ENCODE measurements at regions of chr6 and their contacts with region 1.

Region 1: DNA sequence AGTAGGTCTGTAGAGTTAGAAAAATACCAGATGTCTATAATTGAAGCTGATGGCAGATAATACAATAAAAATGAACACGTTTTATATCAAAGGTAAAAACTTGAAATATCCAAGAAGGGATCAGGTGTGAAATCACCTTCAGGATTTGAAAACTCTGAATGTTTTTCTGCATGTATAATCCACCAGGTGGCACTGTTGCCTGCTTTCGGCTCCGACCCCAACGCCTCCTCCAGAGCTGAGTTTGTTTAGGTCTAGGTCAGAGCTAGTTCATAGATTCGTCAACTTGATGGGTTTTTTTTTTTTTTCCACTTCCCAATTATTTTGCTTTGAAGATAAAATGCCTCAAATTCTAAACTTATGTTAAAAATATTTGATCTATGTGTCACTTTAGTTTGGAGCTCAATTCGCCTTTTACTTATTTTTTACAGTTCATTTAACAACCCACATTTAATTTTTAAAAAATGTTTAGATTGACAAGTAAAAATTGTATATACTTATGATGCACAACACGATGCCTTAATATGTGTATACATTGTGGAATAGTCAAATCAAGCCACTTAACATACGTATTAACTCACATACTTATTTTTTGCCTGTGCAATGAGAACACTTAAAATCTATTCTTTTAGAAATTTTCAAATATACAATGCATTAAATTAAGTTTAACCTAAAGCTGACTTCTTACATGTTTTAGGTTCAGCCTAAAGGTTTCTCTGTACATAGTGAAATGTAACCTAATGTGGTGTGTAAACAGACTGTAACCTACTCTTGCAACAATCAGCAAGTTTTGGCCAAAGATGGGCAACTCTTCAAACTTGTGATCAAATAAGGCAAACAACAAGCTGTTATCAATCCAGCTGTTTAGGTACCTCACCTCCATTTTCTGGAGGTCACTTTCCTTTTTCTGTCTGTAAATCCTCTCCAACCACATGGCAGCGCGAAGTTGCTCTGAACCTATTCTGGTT is 39.4 kb upstream of the ENPP4 start:
- DNase-seq: peak; percentile 37 to 70 (median 47)
- ATAC-seq: peak in 3 of 4 donors; percentile 63 to 68 (median 67)
- H3K4me3 ChIP-seq: no peak overlapping the region
- H3K27ac ChIP-seq: no peak overlapping the region
- H3K4me1 ChIP-seq: peaks cover 0 to 3% (median 0%) of the 10 kb centered on the region in 12 donors
- H3K27me3 ChIP-seq: peaks cover 0 to 9% (median 0%) of the 10 kb centered on the region in 9 donors
- CTCF ChIP-seq: peak; percentile 71 to 90 (median 84)
- POLR2A ChIP-seq: no peak

Region 2: DNA sequence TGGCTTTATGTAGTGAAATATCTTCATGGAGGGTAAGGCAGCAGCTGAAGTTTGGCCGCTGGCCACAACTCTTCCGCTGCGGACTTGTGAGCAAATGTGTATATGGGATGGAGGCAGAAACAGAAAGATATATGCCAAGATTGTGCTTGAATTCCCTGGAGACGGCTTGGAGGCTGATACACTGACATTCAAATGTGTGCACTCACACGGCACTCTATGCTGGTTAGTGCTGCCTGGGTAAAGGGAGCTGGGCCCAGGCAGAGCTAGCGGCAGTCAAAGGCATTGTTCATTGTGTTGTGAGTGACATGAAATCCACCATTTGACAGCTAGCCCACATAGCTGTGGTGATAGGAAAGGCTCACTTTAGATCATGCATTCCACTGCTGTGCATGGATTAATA is 277.5 kb before region 1 on chr6:
- intact Hi-C with region 1: no loop called
- DNase-seq: peak in 2 of 5 donors; percentile 7 to 35
- ATAC-seq: peak; percentile 78 to 86 (median 80)
- H3K4me3 ChIP-seq: no peak overlapping the region
- H3K27ac ChIP-seq: no peak overlapping the region
- H3K4me1 ChIP-seq: peaks cover 0 to 10% (median 0%) of the 10 kb centered on the region in 12 donors
- H3K27me3 ChIP-seq: no peaks in the 10 kb centered on the region
- CTCF ChIP-seq: no peak
- POLR2A ChIP-seq: no peak

Region 3: DNA sequence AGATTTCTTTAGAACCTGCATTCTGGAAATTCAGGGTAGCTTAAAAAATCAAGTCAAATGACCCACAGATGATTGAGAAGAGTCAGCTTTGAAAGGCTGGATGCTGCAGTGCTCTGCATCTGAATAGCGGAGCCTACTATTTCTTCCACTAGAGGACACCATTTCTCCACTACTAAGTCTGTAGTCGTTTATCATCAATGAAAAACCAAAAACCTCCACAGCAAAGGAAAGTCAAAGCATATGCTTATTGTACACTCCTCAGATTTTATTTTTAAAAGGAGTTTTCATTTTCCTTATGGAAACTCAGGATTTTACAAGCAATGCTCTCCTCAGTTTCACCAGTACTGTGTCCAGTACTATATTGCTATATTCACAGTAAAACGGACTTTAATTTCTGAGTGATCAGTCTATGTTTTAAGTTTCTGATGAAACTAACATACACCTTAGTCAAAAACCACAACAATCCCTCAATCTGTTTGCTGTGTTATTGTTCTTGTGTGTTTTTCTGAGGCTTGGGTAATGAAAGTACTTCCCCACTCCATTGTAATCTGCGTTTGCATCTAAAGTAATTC is 130.9 kb after region 1 on chr6:
- intact Hi-C with region 1: loop called in 5 of 10 experiments (anchors 5 kb)
- DNase-seq: no peak
- ATAC-seq: peak in 3 of 4 donors; percentile 35 to 67 (median 55)
- H3K4me3 ChIP-seq: no peak overlapping the region
- H3K27ac ChIP-seq: no peak overlapping the region
- H3K4me1 ChIP-seq: peaks cover 0 to 35% (median 7%) of the 10 kb centered on the region in 12 donors
- H3K27me3 ChIP-seq: no peaks in the 10 kb centered on the region
- CTCF ChIP-seq: peak; percentile 72 to 90 (median 84)
- POLR2A ChIP-seq: no peak

Region 4: DNA sequence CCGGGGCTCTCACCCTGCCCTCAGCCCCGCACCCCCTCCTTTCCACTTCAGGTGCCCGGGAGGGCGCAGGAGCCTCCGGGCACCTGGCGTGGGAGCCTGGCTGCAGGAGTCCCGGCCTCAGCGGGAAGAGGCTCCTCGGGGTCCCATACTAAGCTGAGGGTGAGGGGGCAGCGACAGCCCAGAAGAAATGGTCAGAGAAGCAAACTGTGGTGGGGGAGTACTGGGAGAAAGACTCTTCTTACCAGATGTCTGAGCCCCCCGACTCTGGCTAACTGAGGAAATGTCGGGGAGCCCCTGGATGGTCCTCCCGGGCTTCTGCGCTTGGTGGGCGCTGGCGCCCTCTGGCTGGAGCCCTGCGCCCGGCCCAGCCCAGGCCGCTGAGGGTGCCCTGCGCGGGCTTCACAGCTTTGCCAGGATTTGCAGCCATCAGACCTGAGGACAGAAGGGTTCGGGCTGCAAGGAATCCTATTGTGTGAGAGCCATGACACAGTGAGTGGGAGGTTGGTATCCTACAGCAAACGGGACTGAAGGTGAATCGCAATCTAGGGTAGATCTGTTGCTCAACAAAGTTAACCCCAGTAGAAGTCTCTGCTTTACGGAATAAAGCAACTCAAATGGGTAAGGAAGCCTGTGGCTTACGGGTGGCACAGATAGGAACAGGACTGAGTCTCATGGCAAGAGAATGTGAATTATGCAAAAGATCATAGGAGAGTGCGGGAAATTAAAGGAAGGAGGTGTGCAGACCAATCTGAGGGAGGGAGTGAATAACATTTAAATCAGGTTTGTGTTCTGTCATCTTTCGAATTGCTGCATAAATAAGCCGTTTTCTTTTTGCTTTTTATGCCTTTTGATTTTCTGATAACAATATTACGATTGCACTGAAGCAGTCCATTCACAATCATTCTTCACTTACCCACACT is 401.5 kb after region 1 on chr6:
- intact Hi-C with region 1: loop called in 1 of 10 experiments (anchors 2 kb)
- DNase-seq: peak; percentile 66 to 77 (median 77)
- ATAC-seq: peak; percentile 86 to 91 (median 88)
- H3K4me3 ChIP-seq: peak overlapping the region; percentile 43 to 94 (median 72)
- H3K27ac ChIP-seq: peak overlapping the region; percentile 70 to 94 (median 92)
- H3K4me1 ChIP-seq: peaks cover 0 to 37% (median 14%) of the 10 kb centered on the region in 12 donors
- H3K27me3 ChIP-seq: peaks cover 0 to 38% (median 0%) of the 10 kb centered on the region in 9 donors
- CTCF ChIP-seq: peak; percentile 53 to 90 (median 71)
- POLR2A ChIP-seq: no peak

Region 5: DNA sequence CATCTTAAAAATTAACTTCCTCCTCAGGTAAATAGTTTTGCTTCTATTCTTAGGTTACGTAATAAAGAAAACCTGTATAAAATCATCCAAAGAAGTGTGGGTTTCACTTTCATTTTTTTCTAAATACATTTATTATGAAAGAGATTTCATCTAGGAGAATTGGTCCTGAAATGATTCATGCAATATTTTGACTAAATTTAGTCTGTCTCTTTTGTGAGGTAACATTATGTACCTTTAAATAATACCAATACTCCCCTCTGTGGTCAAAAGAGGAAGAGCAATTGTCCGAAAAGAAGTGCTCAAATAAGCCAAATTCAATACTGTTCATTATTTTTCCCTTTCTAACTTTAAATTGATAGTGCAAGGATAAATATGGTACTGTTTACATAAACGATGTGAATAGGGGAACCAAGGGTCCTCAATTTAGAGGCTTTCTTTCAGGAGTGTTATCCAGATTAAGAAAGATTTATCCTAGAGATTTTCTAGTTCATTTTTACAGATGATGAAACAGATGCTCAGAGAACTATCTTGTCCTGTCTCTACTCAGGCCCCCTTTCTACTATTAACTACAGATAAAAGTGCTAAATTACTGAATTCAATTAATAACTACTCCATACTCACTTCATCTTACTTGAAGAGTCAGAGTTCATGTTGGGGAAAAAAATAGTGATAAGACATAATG is 536.0 kb after region 1 on chr6:
- intact Hi-C with region 1: loop called in 7 of 10 experiments (anchors 5 to 10 kb)
- DNase-seq: no peak
- ATAC-seq: peak in 1 of 4 donors; percentile 59
- H3K4me3 ChIP-seq: peak overlapping the region in 2 of 12 donors; percentile 23 to 28
- H3K27ac ChIP-seq: no peak overlapping the region
- H3K4me1 ChIP-seq: peaks cover 0 to 11% (median 0%) of the 10 kb centered on the region in 12 donors
- H3K27me3 ChIP-seq: no peaks in the 10 kb centered on the region
- CTCF ChIP-seq: peak; percentile 37 to 77 (median 68)
- POLR2A ChIP-seq: no peak